ENCODE measurements at regions of chr19 and their contacts with region 1.

Region 1: GRCh38 chr19:18281082-18282020 is at the start of gene JUND:
- DNase-seq: peak; percentile 98
- CTCF ChIP-seq: peak; percentile 3

Region 2: GRCh38 chr19:18007044-18007916 is 274.1 kb before region 1 on chr19:
- CTCF ChIA-PET with region 1: no interaction called
- POLR2A ChIA-PET with region 1: no interaction called
- DNase-seq: peak; percentile 87
- CTCF ChIP-seq: peak; percentile 99

Region 3: GRCh38 chr19:18203863-18204393 is 77.4 kb before region 1 on chr19 and contains the start of gene RAB3A:
- CTCF ChIA-PET with region 1: interaction called, 18 read pairs
- POLR2A ChIA-PET with region 1: interaction called, 36 read pairs
- DNase-seq: peak; percentile 99
- CTCF ChIP-seq: no peak

Region 4: GRCh38 chr19:18259893-18260292 is 21.5 kb before region 1 on chr19:
- CTCF ChIA-PET with region 1: interaction called, 24 read pairs
- POLR2A ChIA-PET with region 1: interaction called, 7 read pairs
- DNase-seq: no peak
- CTCF ChIP-seq: no peak

Region 5: DNA sequence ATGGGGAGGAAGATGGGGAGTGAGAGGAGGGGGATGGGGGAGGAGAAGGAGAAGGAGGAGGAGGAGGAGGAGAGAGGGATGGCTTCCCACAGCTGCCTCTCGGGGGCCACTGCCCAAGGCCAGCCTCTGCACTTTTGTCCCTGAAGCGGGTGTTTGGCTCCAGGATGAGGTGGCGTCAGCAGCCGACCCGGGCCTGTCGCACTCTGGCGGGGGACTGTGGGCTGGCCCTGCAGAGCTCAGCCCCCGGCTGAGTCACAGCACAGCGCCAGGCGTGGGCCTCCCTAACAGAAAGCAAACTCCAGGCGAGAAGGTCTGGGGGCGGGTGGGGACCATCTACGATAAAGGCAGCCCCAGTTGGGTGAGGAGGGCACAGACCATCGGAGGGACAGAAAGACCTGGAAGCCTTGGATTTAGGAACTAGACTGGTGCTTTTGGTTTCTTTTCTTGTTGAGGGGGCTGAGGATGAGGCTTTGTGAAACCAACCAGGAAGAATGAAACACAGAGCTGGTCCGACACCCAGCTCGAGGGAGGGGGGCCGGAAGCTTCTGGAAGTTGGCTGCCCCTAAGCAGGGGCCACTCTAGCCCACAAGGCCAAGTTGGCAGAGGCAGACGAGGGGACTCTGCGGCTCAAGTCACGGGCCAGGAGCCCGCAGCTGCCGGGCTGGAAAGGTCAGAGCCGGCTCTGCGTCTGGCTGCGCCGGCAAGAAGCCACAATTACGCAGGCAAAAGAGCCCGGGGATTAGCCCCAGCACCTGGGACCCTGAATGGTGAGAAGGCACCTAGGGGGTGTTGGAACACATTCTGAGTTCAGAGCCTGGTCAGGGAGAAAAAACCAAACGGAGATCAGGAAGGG is 23.3 kb after region 1 on chr19:
- CTCF ChIA-PET with region 1: interaction called, 60 read pairs
- POLR2A ChIA-PET with region 1: interaction called, 120 read pairs
- DNase-seq: peak; percentile 89
- CTCF ChIP-seq: no peak

Region 6: DNA sequence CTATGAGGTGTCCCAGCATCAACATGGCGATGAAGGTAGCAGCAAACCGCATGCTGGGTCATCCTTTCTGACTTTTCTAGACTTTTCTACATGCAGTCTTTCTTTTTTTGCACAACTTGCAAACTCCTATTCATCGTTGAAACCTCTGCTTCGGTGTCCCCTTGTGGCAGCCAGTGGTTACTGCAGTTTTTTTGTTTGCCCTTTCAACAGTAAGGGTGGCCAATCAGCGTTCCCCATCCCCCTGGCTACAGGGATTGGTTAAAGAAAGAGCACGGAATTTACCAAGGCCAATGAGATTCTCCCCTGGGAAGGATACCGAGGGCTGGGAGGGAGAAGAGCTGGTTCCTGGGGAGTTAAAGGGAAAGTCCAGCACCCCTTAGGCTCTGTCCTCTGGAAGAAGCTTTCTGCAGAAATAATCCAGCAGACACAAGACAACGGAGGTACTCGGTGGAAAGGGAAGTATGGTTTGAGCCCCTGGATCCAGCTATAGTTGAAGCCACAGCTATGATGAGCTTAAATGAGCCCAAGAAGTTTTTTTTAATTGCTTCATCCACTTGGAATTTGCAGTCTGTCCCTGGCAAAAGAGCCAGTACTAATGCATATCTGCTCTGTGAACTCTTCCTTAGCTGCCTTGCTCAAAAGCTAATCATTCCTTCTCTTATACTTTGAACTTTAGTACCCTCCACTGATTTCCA is 47.1 kb after region 1 on chr19:
- CTCF ChIA-PET with region 1: interaction called, 171 read pairs
- POLR2A ChIA-PET with region 1: interaction called, 90 read pairs
- DNase-seq: peak; percentile 95
- CTCF ChIP-seq: peak; percentile 83

Region 7: DNA sequence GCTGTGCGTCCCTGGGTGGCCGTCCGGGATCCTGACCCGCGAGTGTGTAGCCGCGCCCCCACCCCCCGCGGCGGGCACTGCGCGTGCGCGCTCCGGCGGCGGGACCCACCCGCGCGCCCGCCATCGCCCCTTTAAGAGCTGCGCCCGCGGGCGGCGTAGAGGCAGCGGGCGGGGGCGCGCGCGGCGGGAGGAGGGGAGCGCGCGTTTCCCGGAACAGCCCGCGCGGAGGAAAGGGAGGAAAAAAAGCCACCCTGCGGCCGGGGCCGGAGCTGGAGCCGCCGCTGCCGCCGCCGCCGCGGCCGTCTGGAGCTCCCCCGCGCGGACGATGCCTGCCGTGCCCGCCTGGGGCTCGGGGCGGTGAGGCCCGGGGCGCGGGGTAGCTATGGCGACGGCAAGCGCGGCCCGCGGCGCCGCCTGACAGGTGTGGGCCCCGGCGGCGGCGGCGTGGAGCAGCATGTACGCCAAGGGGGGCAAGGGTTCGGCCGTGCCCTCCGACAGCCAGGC is 137.9 kb after region 1 on chr19 and contains the start of gene SSBP4:
- CTCF ChIA-PET with region 1: interaction called, 44 read pairs
- POLR2A ChIA-PET with region 1: interaction called, 43 read pairs
- DNase-seq: peak; percentile 91
- CTCF ChIP-seq: peak; percentile 30

Measured in GM10248 (cell line).